Activated CD8-positive, alpha-beta memory T cell treated with anti-CD3 and anti-CD28 coated beads, Interleukin-2, amount 10 ng/mL, durations not matched to agents 7 days and 5 days (primary cell): ENCODE measurements at regions of chr11 and their contacts with region 1.

Region 1: DNA sequence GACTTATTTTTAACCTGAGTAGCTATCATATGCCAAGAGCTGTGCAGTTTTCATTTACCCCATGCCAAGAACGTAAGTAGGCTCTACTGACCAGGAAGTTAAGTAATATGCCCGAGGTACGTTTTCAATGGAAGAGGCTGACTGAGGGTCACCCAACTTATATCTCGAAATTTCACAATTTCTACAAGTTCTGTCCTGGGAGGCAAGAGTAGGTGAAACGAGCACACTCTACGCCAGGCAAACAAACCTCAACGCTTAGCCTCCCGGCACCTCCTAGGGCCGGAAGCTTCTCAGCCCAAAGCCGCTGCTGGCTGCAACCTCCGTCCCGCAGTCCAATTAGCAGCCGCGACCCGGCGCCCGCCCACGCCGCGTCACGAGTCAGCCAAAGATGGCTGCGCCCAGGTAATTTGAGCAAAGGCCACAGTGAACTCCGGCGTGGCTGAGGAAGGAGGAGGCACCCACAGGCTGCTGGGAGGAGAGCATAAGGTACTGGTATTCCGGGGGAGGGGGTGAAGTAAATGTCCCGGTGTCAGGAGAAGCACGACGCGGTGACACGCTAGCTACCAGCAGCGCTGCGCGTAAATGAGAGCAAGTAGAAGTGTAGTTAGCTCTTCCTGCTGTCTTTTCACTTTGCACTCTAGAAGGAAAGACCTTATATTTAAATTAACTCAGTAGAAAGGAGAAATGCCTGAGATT is at the start of gene TMEM126A:
- DNase-seq: peak; percentile 94
- ATAC-seq: peak; percentile 99
- H3K4me3 Mint-ChIP-seq: peak within 1 kb of the TSS; percentile 100
- H3K27ac Mint-ChIP-seq: peak within 1 kb of the TSS; percentile 99
- H3K4me1 Mint-ChIP-seq: peaks cover 36% of the 10 kb centered on the region
- H3K27me3 Mint-ChIP-seq: peaks cover 25% of the 10 kb centered on the region
- total RNA-seq, gene TMEM126A: 28.4 to 39.0 TPM

Region 2: GRCh38 chr11:85634747-85635146 is 13.0 kb before region 1 on chr11:
- CTCF ChIA-PET with region 1: interaction called, 11 read pairs
- DNase-seq: no peak
- ATAC-seq: no peak
- H3K4me3 Mint-ChIP-seq: no peak overlapping the region
- H3K27ac Mint-ChIP-seq: no peak overlapping the region
- H3K4me1 Mint-ChIP-seq: peaks cover 10% of the 10 kb centered on the region
- H3K27me3 Mint-ChIP-seq: no peaks in the 10 kb centered on the region

Region 3: DNA sequence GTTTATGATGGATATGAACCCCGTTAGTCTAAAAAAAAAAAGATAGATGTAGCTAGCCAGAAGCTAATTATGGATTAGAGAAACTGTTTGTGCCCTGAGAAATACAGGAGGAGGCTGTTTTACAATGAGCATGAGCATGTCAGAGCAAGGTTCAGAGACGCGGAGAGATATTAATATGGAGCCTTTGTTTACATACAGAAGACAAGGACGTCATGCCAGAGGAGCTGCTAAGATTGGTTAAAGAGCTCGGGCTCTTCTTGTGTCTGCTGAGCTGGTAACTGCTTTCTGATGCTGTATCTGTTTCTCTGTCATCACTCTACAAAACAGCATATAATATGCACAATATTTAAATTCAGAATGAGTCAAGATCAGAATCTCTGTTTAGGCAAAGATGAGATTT is 63.2 kb after region 1 on chr11:
- CTCF ChIA-PET with region 1: no interaction called
- DNase-seq: no peak
- ATAC-seq: no peak
- H3K4me3 Mint-ChIP-seq: no peak overlapping the region
- H3K27ac Mint-ChIP-seq: no peak overlapping the region
- H3K4me1 Mint-ChIP-seq: no peaks in the 10 kb centered on the region
- H3K27me3 Mint-ChIP-seq: no peaks in the 10 kb centered on the region